Vagina (tissue), 2 donors: ENCODE measurements at regions of chr1 and their contacts with region 1.

Region 1: GRCh38 chr1:224513787-224514209 is 79.2 kb upstream of the WDR26 start:
- DNase-seq: no peak
- H3K4me3 ChIP-seq: no peak overlapping the region
- H3K27ac ChIP-seq: no peak overlapping the region
- H3K4me1 ChIP-seq: peaks cover 26% of the 10 kb centered on the region
- H3K27me3 ChIP-seq: no peaks in the 10 kb centered on the region
- CTCF ChIP-seq: peak; percentile 79 to 90 (median 89)
- POLR2A ChIP-seq: no peak

Region 2: GRCh38 chr1:224851210-224851847 is 337.5 kb after region 1 on chr1:
- intact Hi-C with region 1: loop called (anchors 5 kb)
- DNase-seq: no peak
- H3K4me3 ChIP-seq: no peak overlapping the region
- H3K27ac ChIP-seq: no peak overlapping the region
- H3K4me1 ChIP-seq: no peaks in the 10 kb centered on the region
- H3K27me3 ChIP-seq: no peaks in the 10 kb centered on the region
- CTCF ChIP-seq: peak in 1 of 3 experiments; percentile 21
- POLR2A ChIP-seq: no peak